ENCODE measurements at regions of chr11 and their contacts with region 1.

Region 1: GRCh38 chr11:73184953-73185671 is 33.0 kb upstream of the P2RY2 start:
- DNase-seq: peak; percentile 68
- H3K4me3 ChIP-seq: no peak overlapping the region
- H3K27ac ChIP-seq: no peak overlapping the region
- H3K4me1 ChIP-seq: no peaks in the 10 kb centered on the region
- H3K27me3 ChIP-seq: no peaks in the 10 kb centered on the region
- CTCF ChIP-seq: peak; percentile 57 to 93 (median 80)
- POLR2A ChIP-seq: no peak

Region 2: DNA sequence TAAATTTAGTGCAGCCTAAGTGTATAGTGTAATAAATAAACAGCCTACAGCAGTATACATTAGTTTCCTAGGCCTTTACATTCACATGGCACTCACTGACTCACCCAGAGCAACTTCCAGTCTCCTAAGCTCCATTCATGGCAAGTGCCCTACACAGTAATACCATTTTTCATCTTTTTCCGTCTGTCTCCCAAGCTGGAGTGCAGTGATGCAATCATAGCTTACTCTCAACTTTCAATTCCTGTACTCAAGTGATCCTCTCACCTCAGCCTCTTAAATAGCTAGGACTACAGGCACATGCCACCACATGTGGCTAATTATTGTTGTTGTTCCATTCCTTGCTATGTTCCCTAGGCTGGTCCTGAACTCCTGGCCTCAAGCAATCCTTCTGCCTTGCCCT is 97.4 kb before region 1 on chr11:
- intact Hi-C with region 1: no loop called
- DNase-seq: no peak
- H3K4me3 ChIP-seq: no peak overlapping the region
- H3K27ac ChIP-seq: no peak overlapping the region
- H3K4me1 ChIP-seq: no peaks in the 10 kb centered on the region
- H3K27me3 ChIP-seq: no peaks in the 10 kb centered on the region
- CTCF ChIP-seq: no peak
- POLR2A ChIP-seq: no peak

Region 3: GRCh38 chr11:73242251-73243079 is 57.4 kb after region 1 on chr11:
- intact Hi-C with region 1: loop called (anchors 5 kb)
- DNase-seq: peak; percentile 68
- H3K4me3 ChIP-seq: no peak overlapping the region
- H3K27ac ChIP-seq: no peak overlapping the region
- H3K4me1 ChIP-seq: no peaks in the 10 kb centered on the region
- H3K27me3 ChIP-seq: no peaks in the 10 kb centered on the region
- CTCF ChIP-seq: peak; percentile 81 to 94 (median 90)
- POLR2A ChIP-seq: no peak

Region 4: DNA sequence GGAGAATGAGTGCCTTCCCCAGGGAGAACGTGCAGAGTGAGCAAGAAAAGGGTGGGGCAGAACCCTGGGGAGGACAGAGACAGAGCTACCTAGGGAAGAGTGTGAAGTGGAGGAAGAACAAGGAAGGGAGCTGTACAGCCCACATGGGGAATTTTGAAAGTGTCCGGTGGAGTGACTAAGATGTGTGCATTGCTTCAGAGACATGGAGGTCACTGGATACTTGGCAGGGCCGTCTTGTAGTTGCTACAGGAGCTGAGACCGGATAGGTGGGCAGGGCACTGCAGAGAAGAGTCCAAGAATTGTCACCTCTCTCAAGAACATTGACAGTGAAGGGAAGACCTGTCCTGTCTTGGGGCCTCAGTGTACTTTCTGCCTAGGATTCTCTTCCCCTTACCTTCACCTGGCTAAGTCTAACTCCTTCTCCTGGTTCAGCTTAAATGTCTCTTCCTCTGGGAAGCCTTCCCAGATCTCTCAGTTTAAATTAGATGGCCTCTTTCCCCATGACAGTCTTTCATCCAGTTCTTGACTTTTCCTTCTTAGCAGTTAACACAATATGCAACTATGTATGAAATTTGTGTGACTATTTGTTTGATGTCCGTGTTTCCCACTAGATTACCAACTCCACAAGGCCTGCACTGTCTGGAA is 77.9 kb after region 1 on chr11:
- intact Hi-C with region 1: no loop called
- DNase-seq: no peak
- H3K4me3 ChIP-seq: no peak overlapping the region
- H3K27ac ChIP-seq: no peak overlapping the region
- H3K4me1 ChIP-seq: peaks cover 2% of the 10 kb centered on the region
- H3K27me3 ChIP-seq: no peaks in the 10 kb centered on the region
- CTCF ChIP-seq: no peak
- POLR2A ChIP-seq: no peak

Region 5: GRCh38 chr11:73288873-73289707 is 104.0 kb after region 1 on chr11:
- intact Hi-C with region 1: loop called (anchors 5 kb)
- DNase-seq: peak; percentile 40
- H3K4me3 ChIP-seq: no peak overlapping the region
- H3K27ac ChIP-seq: no peak overlapping the region
- H3K4me1 ChIP-seq: no peaks in the 10 kb centered on the region
- H3K27me3 ChIP-seq: no peaks in the 10 kb centered on the region
- CTCF ChIP-seq: peak; percentile 26 to 90 (median 81)
- POLR2A ChIP-seq: no peak

Measured in prostate gland (tissue), 2 donors.